CD4-positive, alpha-beta memory T cell (primary cell): ENCODE measurements at regions of chr5 and their contacts with region 1.

Region 1: DNA sequence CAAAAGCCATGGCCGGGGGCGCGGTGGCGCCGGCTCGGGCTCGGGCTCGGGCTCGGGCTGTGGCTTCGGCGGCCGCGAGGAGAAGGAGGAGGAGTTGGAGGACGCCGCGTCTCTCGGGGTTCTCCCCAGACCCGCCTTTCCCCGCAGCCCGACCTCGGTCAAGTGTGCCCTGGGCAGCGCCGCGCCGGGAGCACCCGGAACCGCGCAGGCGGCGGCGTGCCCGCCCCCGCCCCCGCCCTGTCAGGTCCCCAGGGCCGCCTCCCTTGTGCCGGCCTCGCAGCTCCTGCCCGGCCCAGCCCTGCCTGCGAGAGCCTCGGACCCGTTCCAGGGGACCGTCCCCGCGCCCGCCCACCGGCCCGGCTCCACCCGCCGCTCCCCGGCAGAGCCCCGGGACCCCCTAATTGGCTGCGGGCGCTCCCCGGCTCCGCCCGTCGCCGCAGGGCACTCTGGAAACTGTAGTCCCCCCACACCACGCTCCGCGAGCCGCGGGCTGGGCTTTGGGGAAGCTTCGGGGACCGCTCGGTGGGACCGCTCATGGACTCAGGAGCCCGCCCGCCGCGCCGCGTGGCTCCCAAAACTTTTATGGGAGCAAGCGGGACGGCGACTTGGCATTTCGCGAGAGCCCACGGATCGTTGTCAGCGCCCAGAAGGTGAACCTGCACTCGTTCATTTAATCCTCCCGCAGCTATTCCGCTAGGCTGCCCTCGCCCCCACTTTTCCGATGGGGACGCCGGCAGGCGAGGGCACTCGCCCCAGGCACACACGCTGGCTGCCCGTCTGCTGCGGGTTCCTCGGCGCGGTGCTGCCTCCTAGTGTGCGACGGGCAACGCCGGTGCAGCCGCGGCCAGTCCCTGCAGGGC is at the start of gene STK10:
- DNase-seq: peak; percentile 89 to 92 (median 92)
- H3K4me3 ChIP-seq: peak within 1 kb of the TSS; percentile 94 to 96
- H3K4me3 Mint-ChIP-seq: peak within 1 kb of the TSS; percentile 98 to 100 (median 99)
- H3K27ac ChIP-seq: peak within 1 kb of the TSS; percentile 94
- H3K27ac Mint-ChIP-seq: peak within 1 kb of the TSS; percentile 97 to 100 (median 99)
- H3K4me1 ChIP-seq: peaks cover 25% of the 10 kb centered on the region
- H3K4me1 Mint-ChIP-seq: peaks cover 8 to 46% (median 21%) of the 10 kb centered on the region in 4 donors
- H3K27me3 ChIP-seq: no peaks in the 10 kb centered on the region
- H3K27me3 Mint-ChIP-seq: no peaks in the 10 kb centered on the region
- total RNA-seq, gene STK10: 306 to 314 TPM

Region 2: GRCh38 chr5:171907725-171908343 is 280.4 kb before region 1 on chr5:
- CTCF ChIA-PET with region 1: interaction called, 31 read pairs
- POLR2A ChIA-PET with region 1: interaction called, 3 read pairs
- intact Hi-C with region 1: loop called (anchors 1 kb)
- DNase-seq: peak; percentile 43 to 52 (median 45)
- H3K4me3 ChIP-seq: no peak overlapping the region
- H3K4me3 Mint-ChIP-seq: no peak overlapping the region
- H3K27ac ChIP-seq: no peak overlapping the region
- H3K27ac Mint-ChIP-seq: peak overlapping the region in 2 of 7 donors; percentile 4 to 35
- H3K4me1 ChIP-seq: peaks cover 38% of the 10 kb centered on the region
- H3K4me1 Mint-ChIP-seq: peaks cover 34 to 47% (median 41%) of the 10 kb centered on the region in 4 donors
- H3K27me3 ChIP-seq: no peaks in the 10 kb centered on the region
- H3K27me3 Mint-ChIP-seq: no peaks in the 10 kb centered on the region

Region 3: DNA sequence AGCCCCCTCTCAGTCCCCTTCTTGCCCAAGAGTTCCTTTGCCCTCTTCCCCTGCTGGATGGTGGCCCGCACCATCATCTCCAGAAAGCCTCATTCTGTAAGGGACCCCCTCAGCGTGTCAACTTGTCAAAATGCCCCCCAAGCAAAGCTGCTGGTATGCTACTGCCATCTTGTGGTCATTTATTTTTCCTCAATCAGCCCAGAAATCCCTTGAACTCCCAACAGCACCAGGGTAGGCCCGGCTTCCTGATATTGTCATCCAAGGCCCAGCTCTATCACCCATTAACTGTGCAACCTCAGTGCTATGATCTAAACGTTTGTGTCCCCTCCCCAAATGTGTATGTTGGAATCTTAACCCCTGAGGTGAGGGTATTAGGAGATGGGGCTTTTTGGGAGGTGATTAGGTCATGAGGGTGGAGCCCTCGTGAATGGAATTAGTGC is 128.6 kb before region 1 on chr5:
- CTCF ChIA-PET with region 1: interaction called, 12 read pairs
- POLR2A ChIA-PET with region 1: interaction called, 5 read pairs
- intact Hi-C with region 1: no loop called
- DNase-seq: peak in 1 of 5 donors; percentile 25
- H3K4me3 ChIP-seq: no peak overlapping the region
- H3K4me3 Mint-ChIP-seq: no peak overlapping the region
- H3K27ac ChIP-seq: no peak overlapping the region
- H3K27ac Mint-ChIP-seq: peak overlapping the region; percentile 6 to 89 (median 73)
- H3K4me1 ChIP-seq: peaks cover 11% of the 10 kb centered on the region
- H3K4me1 Mint-ChIP-seq: peaks cover 13 to 30% (median 17%) of the 10 kb centered on the region in 4 donors
- H3K27me3 ChIP-seq: no peaks in the 10 kb centered on the region
- H3K27me3 Mint-ChIP-seq: no peaks in the 10 kb centered on the region

Region 4: DNA sequence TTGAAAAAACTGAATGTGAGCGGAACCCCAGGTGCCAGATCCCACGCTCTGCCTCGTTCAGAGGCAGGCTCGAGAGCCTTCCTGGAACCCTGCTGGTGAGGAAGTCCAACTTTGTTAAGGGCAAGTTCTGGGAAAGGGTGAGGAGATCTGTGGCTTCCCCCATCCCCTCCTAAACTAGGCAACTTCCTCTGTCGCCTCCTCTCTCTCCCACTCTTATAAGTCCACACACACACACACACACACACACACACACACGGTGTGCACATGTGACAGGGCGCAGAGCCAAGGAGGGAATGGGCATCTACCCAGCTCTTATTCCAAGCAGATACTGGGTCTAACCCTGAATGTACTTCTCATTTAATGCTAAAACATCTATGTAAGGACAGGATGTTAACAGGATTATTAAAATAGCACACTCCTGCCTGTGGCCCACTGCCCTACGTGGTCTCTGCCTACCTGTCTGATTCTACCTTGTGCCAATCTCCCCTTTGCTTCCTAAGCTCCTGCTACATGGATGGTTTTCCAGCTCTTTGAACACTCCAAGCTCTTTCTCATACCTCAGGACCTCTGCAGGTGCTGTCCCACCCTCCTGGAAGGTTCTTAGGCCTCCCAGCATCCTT is 109.4 kb before region 1 on chr5:
- CTCF ChIA-PET with region 1: interaction called, 15 read pairs
- POLR2A ChIA-PET with region 1: interaction called, 3 read pairs
- intact Hi-C with region 1: no loop called
- DNase-seq: no peak
- H3K4me3 ChIP-seq: no peak overlapping the region
- H3K4me3 Mint-ChIP-seq: peak overlapping the region in 3 of 8 donors; percentile 32 to 62 (median 52)
- H3K27ac ChIP-seq: no peak overlapping the region
- H3K27ac Mint-ChIP-seq: peak overlapping the region; percentile 38 to 95 (median 73)
- H3K4me1 ChIP-seq: peaks cover 11% of the 10 kb centered on the region
- H3K4me1 Mint-ChIP-seq: peaks cover 7 to 29% (median 12%) of the 10 kb centered on the region in 4 donors
- H3K27me3 ChIP-seq: no peaks in the 10 kb centered on the region
- H3K27me3 Mint-ChIP-seq: no peaks in the 10 kb centered on the region

Region 5: DNA sequence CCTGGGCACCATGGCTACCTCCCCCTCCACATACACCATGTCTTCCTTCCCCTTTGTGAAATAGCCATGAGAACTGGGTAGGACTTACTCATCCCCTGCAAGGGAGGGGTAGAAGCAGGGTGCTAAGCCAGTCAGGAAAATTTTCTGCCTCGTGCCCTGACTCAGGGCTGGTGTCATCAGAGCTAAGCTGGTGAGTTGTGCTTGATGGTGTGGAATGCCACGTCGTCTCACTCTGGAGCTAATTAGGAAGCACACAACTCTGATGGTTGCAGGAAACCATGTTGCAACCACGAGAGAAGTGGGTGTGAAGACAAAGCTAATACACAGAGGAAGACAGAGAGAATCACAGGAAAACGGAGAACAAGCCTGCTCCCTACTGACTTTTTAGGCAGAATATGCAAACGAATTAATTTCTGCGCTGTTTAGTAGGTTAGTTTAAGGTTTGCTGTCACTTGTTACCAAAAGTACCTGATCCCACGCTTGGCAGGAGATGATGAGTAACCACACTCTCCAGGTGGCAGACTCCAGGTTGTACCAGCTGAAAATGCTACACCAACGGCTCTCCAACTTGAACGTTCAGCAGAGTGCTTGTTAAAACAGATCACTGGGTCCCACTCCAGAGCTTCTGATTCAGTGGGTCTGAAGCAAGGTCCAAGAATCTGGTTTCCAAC is 54.8 kb before region 1 on chr5:
- CTCF ChIA-PET with region 1: interaction called, 34 read pairs
- POLR2A ChIA-PET with region 1: interaction called, 37 read pairs
- intact Hi-C with region 1: no loop called
- DNase-seq: peak in 4 of 5 donors; percentile 12 to 66 (median 18)
- H3K4me3 ChIP-seq: peak overlapping the region; percentile 2 to 10
- H3K4me3 Mint-ChIP-seq: peak overlapping the region; percentile 33 to 73 (median 58)
- H3K27ac ChIP-seq: peak overlapping the region; percentile 14
- H3K27ac Mint-ChIP-seq: peak overlapping the region; percentile 50 to 94 (median 86)
- H3K4me1 ChIP-seq: peaks cover 64% of the 10 kb centered on the region
- H3K4me1 Mint-ChIP-seq: peaks cover 47 to 76% (median 61%) of the 10 kb centered on the region in 4 donors
- H3K27me3 ChIP-seq: no peaks in the 10 kb centered on the region
- H3K27me3 Mint-ChIP-seq: no peaks in the 10 kb centered on the region

Region 6: DNA sequence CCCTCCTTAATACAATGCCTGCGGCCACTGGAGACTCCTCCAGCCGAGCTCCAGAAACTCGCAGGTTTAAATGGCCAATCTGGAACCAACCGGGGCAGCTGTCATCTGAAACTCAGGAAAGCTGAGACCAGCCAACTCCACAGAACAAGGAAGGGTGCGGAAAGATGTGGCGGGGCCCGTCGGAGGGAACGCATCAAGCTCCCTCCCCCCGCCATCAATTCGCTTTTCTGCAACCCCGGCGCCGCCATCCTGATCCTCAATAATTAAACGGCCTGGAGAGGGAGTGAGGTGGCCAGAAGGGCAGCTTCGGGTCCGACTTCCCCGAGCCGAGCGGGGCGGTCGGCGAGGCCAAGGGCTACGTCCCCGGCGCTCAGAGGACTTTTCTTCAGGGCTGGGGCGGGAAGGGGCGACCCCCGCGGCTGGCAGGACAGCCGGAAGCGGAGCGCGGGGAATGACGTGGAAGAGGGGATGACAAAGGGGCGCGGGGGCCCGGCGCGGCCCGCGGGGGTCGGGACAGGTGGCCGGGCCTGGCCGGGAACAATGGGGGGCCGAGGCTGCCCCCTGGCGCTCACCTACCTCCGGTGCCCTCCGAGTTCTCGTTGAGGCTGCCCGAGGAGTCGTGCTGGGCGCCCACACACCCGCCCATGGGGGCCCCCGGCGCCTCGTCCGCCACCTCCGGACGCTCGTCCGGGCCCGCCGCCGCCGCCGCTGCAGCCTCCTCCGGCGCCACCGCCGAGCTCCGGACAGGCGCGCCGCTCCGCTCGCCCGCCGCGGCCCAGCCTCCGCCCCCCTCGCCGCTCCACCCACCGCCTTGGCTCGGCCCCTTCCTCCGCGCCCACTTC is 95.0 kb after region 1 on chr5 and contains the start of gene UBTD2:
- CTCF ChIA-PET with region 1: interaction called, 15 read pairs
- POLR2A ChIA-PET with region 1: interaction called, 11 read pairs
- intact Hi-C with region 1: loop called (anchors 1 kb)
- DNase-seq: peak; percentile 72 to 82 (median 76)
- H3K4me3 ChIP-seq: peak within 1 kb of the TSS; percentile 47 to 71
- H3K4me3 Mint-ChIP-seq: peak within 1 kb of the TSS; percentile 89 to 93 (median 91)
- H3K27ac ChIP-seq: peak within 1 kb of the TSS; percentile 62
- H3K27ac Mint-ChIP-seq: peak within 1 kb of the TSS; percentile 80 to 96 (median 87)
- H3K4me1 ChIP-seq: peaks cover 26% of the 10 kb centered on the region
- H3K4me1 Mint-ChIP-seq: peaks cover 14 to 34% (median 21%) of the 10 kb centered on the region in 4 donors
- H3K27me3 ChIP-seq: no peaks in the 10 kb centered on the region
- H3K27me3 Mint-ChIP-seq: no peaks in the 10 kb centered on the region
- total RNA-seq, gene UBTD2: 6.3 TPM

Region 7: GRCh38 chr5:172303572-172304335 is 115.5 kb after region 1 on chr5:
- CTCF ChIA-PET with region 1: no interaction called
- POLR2A ChIA-PET with region 1: no interaction called
- intact Hi-C with region 1: no loop called
- DNase-seq: no peak
- H3K4me3 ChIP-seq: no peak overlapping the region
- H3K4me3 Mint-ChIP-seq: no peak overlapping the region
- H3K27ac ChIP-seq: no peak overlapping the region
- H3K27ac Mint-ChIP-seq: no peak overlapping the region
- H3K4me1 ChIP-seq: no peaks in the 10 kb centered on the region
- H3K4me1 Mint-ChIP-seq: no peaks in the 10 kb centered on the region
- H3K27me3 ChIP-seq: no peaks in the 10 kb centered on the region
- H3K27me3 Mint-ChIP-seq: peaks cover 9% of the 10 kb centered on the region in 2 donors